ENCODE measurements at regions of chr6 and their contacts with region 1.

Region 1: DNA sequence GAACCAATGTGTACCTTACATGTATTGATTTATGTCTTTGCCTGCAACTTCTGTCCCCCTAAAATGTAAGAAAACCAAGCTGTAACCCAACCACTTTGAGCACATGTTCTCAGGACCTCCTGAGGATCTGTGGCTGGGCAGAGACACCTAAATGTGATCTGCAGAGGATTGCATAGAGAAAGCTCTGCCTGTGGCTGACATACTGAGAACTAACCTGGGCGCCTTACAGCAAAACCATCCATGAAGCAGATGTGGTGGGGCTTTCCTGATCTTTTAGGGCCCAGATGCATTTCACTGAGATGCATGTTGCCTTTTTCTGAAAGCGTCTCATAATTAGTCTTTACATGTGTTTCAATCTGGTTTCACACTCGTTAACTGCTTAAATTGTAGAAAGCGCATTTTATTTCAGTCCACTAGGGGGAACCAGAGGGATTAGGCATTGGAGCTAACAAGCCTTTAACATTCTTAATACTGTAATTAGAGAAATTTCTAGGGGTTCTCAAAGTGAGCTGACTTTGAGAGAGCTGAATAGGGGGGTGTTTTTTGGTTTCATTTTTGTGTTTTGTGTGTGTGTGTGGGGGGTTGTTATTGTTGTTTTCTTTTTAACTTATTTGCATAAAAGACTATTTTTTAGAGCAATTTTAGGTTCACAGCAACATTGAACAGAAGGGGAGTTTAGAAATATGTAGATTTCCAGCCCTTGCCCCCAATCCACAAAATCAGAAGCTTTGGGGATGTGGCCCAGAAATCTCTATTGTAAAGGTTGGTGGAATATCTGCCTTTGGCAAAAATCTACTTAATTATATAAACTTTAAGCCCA is 50.9 kb upstream of the FAM184A start:
- DNase-seq: no peak
- H3K4me3 ChIP-seq: no peak overlapping the region
- CTCF ChIP-seq: peak; percentile 60

Region 2: GRCh38 chr6:119116712-119117281 is 12.6 kb before region 1 on chr6:
- CTCF ChIA-PET with region 1: interaction called, 16 read pairs
- POLR2A ChIA-PET with region 1: no interaction called
- DNase-seq: no peak
- H3K4me3 ChIP-seq: no peak overlapping the region
- CTCF ChIP-seq: no peak

Region 3: GRCh38 chr6:119158057-119158848 is 28.9 kb after region 1 on chr6:
- CTCF ChIA-PET with region 1: no interaction called
- POLR2A ChIA-PET with region 1: no interaction called
- DNase-seq: no peak
- H3K4me3 ChIP-seq: no peak overlapping the region
- CTCF ChIP-seq: no peak

Region 4: DNA sequence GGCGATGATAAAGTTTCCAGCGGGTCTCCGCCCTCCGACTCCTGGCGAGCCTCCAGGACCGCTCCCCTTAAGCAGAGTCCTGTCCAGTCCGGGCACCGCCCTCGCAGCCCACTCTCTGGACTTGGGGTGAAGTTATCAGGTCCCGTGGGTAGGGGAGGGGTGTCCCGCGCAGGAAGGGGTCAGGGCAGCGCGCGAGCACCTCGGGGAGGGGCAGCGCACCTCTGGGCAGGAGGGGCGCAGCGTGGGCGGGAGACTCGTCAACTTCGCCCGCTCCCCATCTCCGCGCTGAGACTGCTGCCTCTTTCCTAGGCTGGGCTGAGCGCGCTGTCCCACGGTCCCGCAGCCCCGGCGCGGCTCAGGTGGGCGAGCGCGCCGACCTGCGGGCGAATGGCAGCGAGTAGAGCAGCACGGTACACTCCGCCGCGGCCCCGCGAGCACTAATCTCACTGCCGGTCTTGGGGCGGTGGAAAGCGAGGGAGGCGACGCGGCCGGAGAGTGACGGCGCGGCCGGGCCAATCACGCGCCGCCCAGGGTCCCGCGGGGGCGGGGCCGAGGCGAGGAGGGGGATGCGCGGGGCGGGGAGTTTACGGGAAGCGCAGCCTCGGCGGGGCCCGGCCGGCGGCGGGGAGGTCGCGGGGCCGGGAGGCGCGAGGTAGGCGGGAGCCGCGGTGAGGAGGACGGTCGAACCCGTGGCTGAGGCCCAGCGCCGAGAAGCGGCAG is 220.1 kb after region 1 on chr6 and contains the start of gene MAN1A1:
- CTCF ChIA-PET with region 1: interaction called, 10 read pairs
- POLR2A ChIA-PET with region 1: no interaction called
- DNase-seq: no peak
- H3K4me3 ChIP-seq: peak within 1 kb of the TSS; percentile 81
- CTCF ChIP-seq: no peak

Measured in AG04449 (cell line).